GM12878 (cell line): ENCODE measurements at regions of chr2 and their contacts with region 1.

Region 1: DNA sequence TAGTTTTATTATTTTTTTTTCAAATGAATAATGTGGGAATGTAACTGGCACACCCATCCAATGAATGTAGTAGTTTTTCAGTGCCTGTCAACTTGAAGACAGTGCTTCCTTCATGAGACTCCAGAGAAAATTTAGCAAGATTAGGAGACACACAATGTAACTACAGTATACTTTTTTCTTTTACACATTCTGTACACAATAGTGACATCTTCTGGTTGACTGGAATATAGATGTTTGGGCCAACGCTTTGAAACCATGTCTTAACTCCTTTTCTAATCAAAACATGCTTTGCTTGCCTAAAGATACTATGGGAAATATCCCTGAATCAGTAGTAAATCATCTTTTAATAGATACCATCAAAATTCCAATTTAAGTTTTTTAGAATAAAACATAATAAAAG is 229.5 kb upstream of the ZC3H15 start:
- DNase-seq: peak; percentile 7
- ATAC-seq: peak; percentile 86
- H3K4me3 ChIP-seq: no peak overlapping the region
- H3K27ac ChIP-seq: no peak overlapping the region
- H3K4me1 ChIP-seq: no peaks in the 10 kb centered on the region
- H3K27me3 ChIP-seq: no peaks in the 10 kb centered on the region
- CTCF ChIP-seq: peak; percentile 35 to 56 (median 51); a peak in 4 of 6 replicates
- EP300 ChIP-seq: no peak
- POLR2A ChIP-seq: no peak
- RAD21 ChIP-seq: peak; percentile 71

Region 2: GRCh38 chr2:185628985-185629384 is 627.6 kb before region 1 on chr2:
- CTCF ChIA-PET with region 1: interaction called, 7 read pairs
- POLR2A ChIA-PET with region 1: no interaction called
- RAD21 ChIA-PET with region 1: interaction called, 8 read pairs
- SMC1A ChIA-PET with region 1: no interaction called
- in situ Hi-C with region 1: no loop called
- intact Hi-C with region 1: loop called (anchors 1 kb)
- DNase-seq: no peak
- ATAC-seq: peak; percentile 86
- H3K4me3 ChIP-seq: no peak overlapping the region
- H3K27ac ChIP-seq: no peak overlapping the region
- H3K4me1 ChIP-seq: no peaks in the 10 kb centered on the region
- H3K27me3 ChIP-seq: no peaks in the 10 kb centered on the region
- CTCF ChIP-seq: peak; percentile 32 to 39 (median 32); a peak in 5 of 6 replicates
- EP300 ChIP-seq: no peak
- POLR2A ChIP-seq: no peak
- RAD21 ChIP-seq: peak; percentile 44

Region 3: DNA sequence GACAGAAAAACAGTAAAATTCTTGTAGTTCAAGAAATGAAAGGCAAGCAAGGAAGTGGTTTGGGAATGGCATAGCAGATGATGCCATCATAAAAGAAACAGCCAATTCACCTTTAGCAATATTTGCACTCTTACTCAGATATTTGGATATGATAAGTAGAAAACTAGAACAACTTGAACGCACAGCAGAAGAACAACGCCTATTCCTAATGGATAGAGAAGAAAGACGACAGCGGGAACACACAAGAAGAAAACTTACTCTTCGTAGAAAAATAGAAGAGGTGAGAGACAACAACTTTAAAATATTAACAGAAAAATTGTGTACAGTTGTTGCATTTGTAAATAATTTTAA is 510.0 kb before region 1 on chr2:
- CTCF ChIA-PET with region 1: no interaction called
- POLR2A ChIA-PET with region 1: no interaction called
- RAD21 ChIA-PET with region 1: no interaction called
- SMC1A ChIA-PET with region 1: interaction called, 3 read pairs
- in situ Hi-C with region 1: no loop called
- intact Hi-C with region 1: loop called (anchors 10 kb)
- DNase-seq: no peak
- ATAC-seq: no peak
- H3K4me3 ChIP-seq: no peak overlapping the region
- H3K27ac ChIP-seq: no peak overlapping the region
- H3K4me1 ChIP-seq: no peaks in the 10 kb centered on the region
- H3K27me3 ChIP-seq: no peaks in the 10 kb centered on the region; a peak in 1 of 4 replicates
- CTCF ChIP-seq: no peak
- EP300 ChIP-seq: no peak
- POLR2A ChIP-seq: no peak
- RAD21 ChIP-seq: no peak

Region 4: GRCh38 chr2:186319105-186319504 is 62.6 kb after region 1 on chr2:
- CTCF ChIA-PET with region 1: no interaction called
- POLR2A ChIA-PET with region 1: no interaction called
- RAD21 ChIA-PET with region 1: no interaction called
- SMC1A ChIA-PET with region 1: no interaction called
- in situ Hi-C with region 1: no loop called
- intact Hi-C with region 1: no loop called
- DNase-seq: no peak
- ATAC-seq: no peak
- H3K4me3 ChIP-seq: no peak overlapping the region
- H3K27ac ChIP-seq: no peak overlapping the region
- H3K4me1 ChIP-seq: no peaks in the 10 kb centered on the region
- H3K27me3 ChIP-seq: no peaks in the 10 kb centered on the region
- CTCF ChIP-seq: no peak
- EP300 ChIP-seq: no peak
- POLR2A ChIP-seq: no peak
- RAD21 ChIP-seq: no peak